Gastrocnemius medialis (tissue), 4 donors: ENCODE measurements at regions of chr15 and their contacts with region 1.

Region 1: GRCh38 chr15:33226559-33227181 is 32.2 kb upstream of the FMN1 start:
- DNase-seq: peak; percentile 31 to 37
- ATAC-seq: peak; percentile 80 to 85
- H3K4me3 ChIP-seq: no peak overlapping the region
- H3K27ac ChIP-seq: no peak overlapping the region
- H3K4me1 ChIP-seq: peaks cover 8% of the 10 kb centered on the region in 2 donors
- H3K27me3 ChIP-seq: no peaks in the 10 kb centered on the region
- CTCF ChIP-seq: peak in 4 of 5 experiments; percentile 24 to 56 (median 32)
- POLR2A ChIP-seq: no peak

Region 2: GRCh38 chr15:33159726-33160453 is 66.8 kb before region 1 on chr15:
- in situ Hi-C with region 1: no loop called
- intact Hi-C with region 1: loop called (anchors 1 kb)
- DNase-seq: no peak
- ATAC-seq: peak in 1 of 2 donors; percentile 43
- H3K4me3 ChIP-seq: no peak overlapping the region
- H3K27ac ChIP-seq: peak overlapping the region in 2 of 4 donors; percentile 39 to 48
- H3K4me1 ChIP-seq: peaks cover 12 to 17% of the 10 kb centered on the region in 2 donors
- H3K27me3 ChIP-seq: no peaks in the 10 kb centered on the region
- CTCF ChIP-seq: no peak
- POLR2A ChIP-seq: no peak